ENCODE measurements at regions of chrX and their contacts with region 1.

Region 1: GRCh38 chrX:126165721-126166461 is at the start of gene DCAF12L2:
- DNase-seq: peak; percentile 76
- total RNA-seq, gene DCAF12L2: 1.1 to 2.4 TPM

Region 2: DNA sequence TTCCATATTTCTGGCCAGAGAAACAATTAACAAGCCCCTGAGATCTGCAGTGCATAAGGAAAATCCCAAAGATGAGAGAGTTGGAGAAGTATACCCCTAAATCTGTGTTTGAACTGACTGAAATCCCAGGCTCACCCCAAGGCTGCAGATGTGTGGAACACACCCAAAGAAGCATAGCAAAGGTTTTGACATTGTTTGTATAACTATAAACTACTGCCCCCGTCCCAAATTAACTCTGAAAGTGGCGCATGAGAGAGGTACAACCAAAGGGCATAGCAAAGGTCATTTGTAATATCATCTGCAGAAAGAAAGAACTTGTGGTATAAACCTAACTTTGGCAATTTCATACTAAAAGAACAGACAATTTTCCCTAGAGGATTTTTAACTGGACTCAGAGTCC is 228.8 kb after region 1 on chrX:
- intact Hi-C with region 1: no loop called
- DNase-seq: no peak

Region 3: GRCh38 chrX:127062445-127062844 is 896.6 kb after region 1 on chrX:
- intact Hi-C with region 1: loop called in 1 of 2 experiments (anchors 5 kb)
- DNase-seq: no peak

Measured in posterior vena cava (tissue), 2 donors.